K562 (cell line): ENCODE measurements at regions of chr2 and their contacts with region 1.

Region 1: GRCh38 chr2:166539340-166540162 is 45.5 kb upstream of the SCN7A start:
- DNase-seq: peak; percentile 46 to 70 (median 56)
- ATAC-seq: peak; percentile 95
- H3K4me3 ChIP-seq: no peak overlapping the region
- H3K27ac ChIP-seq: no peak overlapping the region
- H3K4me1 ChIP-seq: no peaks in the 10 kb centered on the region
- H3K27me3 ChIP-seq: no peaks in the 10 kb centered on the region
- CTCF ChIP-seq: peak; percentile 60 to 86 (median 76)
- EP300 ChIP-seq: no peak
- POLR2A ChIP-seq: no peak
- RAD21 ChIP-seq: peak; percentile 92 to 94

Region 2: GRCh38 chr2:166560022-166560421 is 20.5 kb after region 1 on chr2:
- CTCF ChIA-PET with region 1: no interaction called
- POLR2A ChIA-PET with region 1: no interaction called
- in situ Hi-C with region 1: no loop called
- intact Hi-C with region 1: no loop called
- DNase-seq: no peak
- ATAC-seq: no peak
- H3K4me3 ChIP-seq: no peak overlapping the region
- H3K27ac ChIP-seq: no peak overlapping the region
- H3K4me1 ChIP-seq: no peaks in the 10 kb centered on the region
- H3K27me3 ChIP-seq: no peaks in the 10 kb centered on the region
- CTCF ChIP-seq: no peak
- EP300 ChIP-seq: no peak
- POLR2A ChIP-seq: no peak
- RAD21 ChIP-seq: no peak

Region 3: DNA sequence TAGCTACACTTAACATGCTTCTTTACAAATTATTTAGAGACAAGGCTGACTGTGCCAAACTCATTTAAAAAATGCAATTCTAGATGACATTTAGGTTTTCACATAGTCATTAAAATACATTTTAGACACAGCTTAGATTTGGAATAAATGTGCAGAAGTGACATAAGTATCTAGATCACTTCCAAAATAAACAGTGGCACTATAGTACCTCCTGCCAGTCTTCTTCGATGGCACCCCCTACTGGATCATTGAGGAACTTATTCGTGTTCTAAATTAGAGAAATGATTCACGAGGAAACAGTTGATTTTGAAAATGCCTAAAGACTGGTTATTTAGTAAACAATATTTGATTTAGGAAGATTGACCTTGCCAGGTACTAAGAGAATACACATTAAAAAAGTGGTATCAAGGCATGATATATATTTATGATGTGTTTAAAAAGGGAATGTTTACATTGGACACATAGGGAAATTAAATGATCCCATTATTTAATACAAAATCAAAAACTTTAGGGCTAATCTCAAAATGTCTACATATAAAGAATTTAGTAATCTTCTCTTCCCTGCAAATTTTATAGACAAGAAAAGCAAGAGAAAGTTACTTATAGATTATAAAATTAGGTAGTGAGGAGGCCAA is 672.6 kb after region 1 on chr2:
- CTCF ChIA-PET with region 1: no interaction called
- POLR2A ChIA-PET with region 1: no interaction called
- in situ Hi-C with region 1: no loop called
- intact Hi-C with region 1: loop called (anchors 2 kb)
- DNase-seq: peak; percentile 7 to 42 (median 24)
- ATAC-seq: no peak
- H3K4me3 ChIP-seq: no peak overlapping the region
- H3K27ac ChIP-seq: no peak overlapping the region
- H3K4me1 ChIP-seq: no peaks in the 10 kb centered on the region
- H3K27me3 ChIP-seq: no peaks in the 10 kb centered on the region
- CTCF ChIP-seq: peak in 2 of 3 experiments; percentile 30 to 34; a peak in 3 of 6 replicates
- EP300 ChIP-seq: no peak
- POLR2A ChIP-seq: no peak
- RAD21 ChIP-seq: peak in 1 of 2 experiments; percentile 48; a peak in 2 of 4 replicates

Region 4: GRCh38 chr2:167964650-167965413 is 1425.3 kb after region 1 on chr2:
- CTCF ChIA-PET with region 1: no interaction called
- POLR2A ChIA-PET with region 1: no interaction called
- in situ Hi-C with region 1: no loop called
- intact Hi-C with region 1: loop called (anchors 10 kb)
- DNase-seq: peak in 2 of 4 experiments; percentile 27 to 36
- ATAC-seq: peak; percentile 18; the same call in 2 of the 3 replicates
- H3K4me3 ChIP-seq: no peak overlapping the region
- H3K27ac ChIP-seq: peak overlapping the region; percentile 58; the same call in 2 of the 3 replicates
- H3K4me1 ChIP-seq: peaks cover 7 to 46% of the 10 kb centered on the region in 2 experiments; a peak in 4 of 5 replicates
- H3K27me3 ChIP-seq: no peaks in the 10 kb centered on the region
- CTCF ChIP-seq: peak; percentile 34 to 58 (median 36); a peak in 4 of 6 replicates
- EP300 ChIP-seq: no peak; the same call in 1 of the 2 replicates
- POLR2A ChIP-seq: no peak
- RAD21 ChIP-seq: peak; percentile 58 to 60